MCF 10A (cell line): ENCODE measurements at regions of chr22 and their contacts with region 1.

Region 1: GRCh38 chr22:19629720-19630419 is 84.4 kb upstream of the SEPTIN5 start:
- DNase-seq: peak; percentile 83
- H3K4me3 Mint-ChIP-seq: no peak overlapping the region
- H3K27ac Mint-ChIP-seq: no peak overlapping the region
- H3K4me1 Mint-ChIP-seq: peaks cover 6% of the 10 kb centered on the region
- H3K27me3 Mint-ChIP-seq: peaks cover 11% of the 10 kb centered on the region
- CTCF ChIP-seq: peak; percentile 88

Region 2: DNA sequence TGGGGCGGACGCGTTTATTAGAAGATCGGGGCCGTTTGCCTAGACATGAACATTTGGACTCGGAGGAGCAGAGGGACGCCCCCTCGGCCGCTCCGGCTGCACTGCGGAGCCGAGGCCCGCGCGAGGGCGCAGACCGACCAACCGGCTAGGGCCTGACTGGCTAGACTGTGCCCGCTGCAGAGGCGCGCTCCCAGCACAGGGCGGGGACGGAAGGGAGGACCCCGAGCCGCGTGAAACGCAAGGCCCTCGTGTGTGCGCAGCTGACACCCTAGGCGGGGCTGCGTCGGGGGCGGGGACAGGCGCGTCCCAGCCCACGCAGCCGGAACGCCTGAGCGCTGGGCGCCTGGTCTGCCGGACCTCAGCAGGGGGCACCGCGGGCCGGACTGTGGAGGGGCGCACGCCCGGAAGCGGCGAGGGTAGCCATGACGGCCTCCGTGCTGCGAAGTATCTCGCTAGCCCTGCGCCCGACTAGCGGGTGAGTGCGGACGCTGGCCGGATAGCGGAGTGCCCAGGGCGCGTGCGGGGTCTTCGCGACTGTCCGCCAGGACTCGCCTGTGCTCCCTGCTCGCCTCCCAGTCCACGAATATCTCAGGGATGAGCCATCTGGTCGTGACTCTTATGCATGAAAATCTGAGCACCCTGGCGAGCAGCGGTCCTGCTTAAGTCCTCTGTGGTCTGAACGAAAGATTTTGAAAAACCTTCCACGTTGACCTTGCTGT is 197.6 kb before region 1 on chr22 and contains the start of gene MRPL40:
- CTCF ChIA-PET with region 1: interaction called, 5 read pairs
- POLR2A ChIA-PET with region 1: no interaction called
- intact Hi-C with region 1: loop called (anchors 5 kb)
- DNase-seq: peak; percentile 94
- H3K4me3 Mint-ChIP-seq: peak within 1 kb of the TSS; percentile 86
- H3K27ac Mint-ChIP-seq: peak within 1 kb of the TSS; percentile 91
- H3K4me1 Mint-ChIP-seq: peaks cover 11% of the 10 kb centered on the region
- H3K27me3 Mint-ChIP-seq: no peaks in the 10 kb centered on the region
- CTCF ChIP-seq: no peak
- total RNA-seq, gene MRPL40: 51.9 and 66.7 TPM in 2 replicates

Region 3: GRCh38 chr22:19488884-19489843 is 140.7 kb before region 1 on chr22:
- CTCF ChIA-PET with region 1: interaction called, 30 read pairs
- POLR2A ChIA-PET with region 1: interaction called, 6 read pairs
- intact Hi-C with region 1: loop called (anchors 1 kb)
- DNase-seq: peak; percentile 28
- H3K4me3 Mint-ChIP-seq: no peak overlapping the region
- H3K27ac Mint-ChIP-seq: no peak overlapping the region
- H3K4me1 Mint-ChIP-seq: no peaks in the 10 kb centered on the region
- H3K27me3 Mint-ChIP-seq: no peaks in the 10 kb centered on the region
- CTCF ChIP-seq: peak; percentile 9

Region 4: GRCh38 chr22:19619144-19620009 is 10.5 kb before region 1 on chr22:
- CTCF ChIA-PET with region 1: interaction called, 11 read pairs
- POLR2A ChIA-PET with region 1: no interaction called
- intact Hi-C with region 1: no loop called
- DNase-seq: no peak
- H3K4me3 Mint-ChIP-seq: no peak overlapping the region
- H3K27ac Mint-ChIP-seq: no peak overlapping the region
- H3K4me1 Mint-ChIP-seq: no peaks in the 10 kb centered on the region
- H3K27me3 Mint-ChIP-seq: peaks cover 14% of the 10 kb centered on the region
- CTCF ChIP-seq: no peak